Caco-2 (cell line): ENCODE measurements at regions of chr4 and their contacts with region 1.

Region 1: DNA sequence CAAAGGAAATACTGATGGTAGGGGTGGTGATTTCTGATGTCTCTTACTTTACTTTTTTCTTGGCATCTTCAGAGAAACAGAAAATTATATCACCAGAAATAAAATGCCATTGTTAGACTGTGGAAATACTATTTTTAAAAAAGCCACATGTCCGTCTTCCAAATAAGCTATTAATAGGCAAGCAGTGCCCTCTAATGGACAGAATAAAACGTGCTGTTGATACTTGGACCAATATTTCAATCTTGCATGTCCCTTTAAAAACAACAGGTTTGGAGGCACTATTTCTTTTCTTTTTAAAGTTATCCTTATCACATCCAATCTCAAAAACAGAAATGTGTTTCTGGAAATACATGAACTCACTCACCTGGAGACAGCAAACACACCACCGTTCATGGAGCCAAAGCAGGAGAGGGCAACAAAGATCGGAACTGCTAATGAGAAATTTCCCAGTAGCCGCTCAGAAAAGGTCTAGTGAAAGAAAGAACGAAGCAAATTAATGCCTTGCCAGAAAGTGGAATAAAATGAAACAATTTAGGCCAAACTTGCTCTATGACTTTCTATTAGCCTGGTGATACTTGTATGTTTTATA is 59.2 kb downstream of the SLC7A11 start:
- DNase-seq: peak in 1 of 2 experiments; percentile 45
- H3K4me3 ChIP-seq: no peak overlapping the region
- H3K4me3 Mint-ChIP-seq: no peak overlapping the region
- H3K27ac Mint-ChIP-seq: no peak overlapping the region
- H3K4me1 ChIP-seq: no peaks in the 10 kb centered on the region
- H3K4me1 Mint-ChIP-seq: no peaks in the 10 kb centered on the region
- H3K27me3 ChIP-seq: no peaks in the 10 kb centered on the region
- H3K27me3 Mint-ChIP-seq: no peaks in the 10 kb centered on the region
- CTCF ChIP-seq: peak; percentile 50 to 60

Region 2: DNA sequence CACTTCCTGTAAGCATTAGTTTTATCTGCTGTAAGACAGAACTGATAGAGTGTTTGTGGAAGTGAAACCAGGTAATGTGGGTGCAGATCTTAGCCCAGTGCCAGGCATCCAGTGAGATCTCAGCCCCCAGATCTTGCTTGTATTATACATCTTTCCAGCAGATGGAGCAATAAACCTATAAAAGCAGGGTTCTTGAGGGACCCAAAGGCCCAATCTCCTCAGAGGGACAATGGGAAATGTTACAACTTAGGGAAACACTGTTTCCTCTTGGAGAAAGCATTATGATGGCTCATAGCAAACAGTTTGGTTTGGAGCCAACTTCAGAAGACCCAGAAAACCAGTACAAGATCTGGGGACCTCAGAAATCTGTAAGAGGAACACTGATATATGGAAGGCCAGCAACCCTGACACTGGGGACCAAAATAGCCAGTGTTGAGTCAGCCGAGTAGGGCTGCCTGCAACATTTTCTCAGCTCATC is 147.1 kb before region 1 on chr4:
- CTCF ChIA-PET with region 1: interaction called, 6 read pairs
- POLR2A ChIA-PET with region 1: no interaction called
- intact Hi-C with region 1: loop called (anchors 1 kb)
- DNase-seq: peak in 1 of 2 experiments; percentile 56
- H3K4me3 ChIP-seq: no peak overlapping the region
- H3K4me3 Mint-ChIP-seq: no peak overlapping the region
- H3K27ac Mint-ChIP-seq: no peak overlapping the region
- H3K4me1 ChIP-seq: no peaks in the 10 kb centered on the region
- H3K4me1 Mint-ChIP-seq: peaks cover under 1% of the 10 kb centered on the region
- H3K27me3 ChIP-seq: no peaks in the 10 kb centered on the region
- H3K27me3 Mint-ChIP-seq: no peaks in the 10 kb centered on the region
- CTCF ChIP-seq: peak; percentile 58 to 67

Region 3: GRCh38 chr4:138097912-138098600 is 84.9 kb before region 1 on chr4:
- CTCF ChIA-PET with region 1: no interaction called
- POLR2A ChIA-PET with region 1: no interaction called
- intact Hi-C with region 1: loop called (anchors 2 kb)
- DNase-seq: peak in 1 of 2 experiments; percentile 26
- H3K4me3 ChIP-seq: no peak overlapping the region
- H3K4me3 Mint-ChIP-seq: no peak overlapping the region
- H3K27ac Mint-ChIP-seq: no peak overlapping the region
- H3K4me1 ChIP-seq: peaks cover 12% of the 10 kb centered on the region
- H3K4me1 Mint-ChIP-seq: peaks cover 2% of the 10 kb centered on the region
- H3K27me3 ChIP-seq: no peaks in the 10 kb centered on the region
- H3K27me3 Mint-ChIP-seq: no peaks in the 10 kb centered on the region
- CTCF ChIP-seq: no peak